ENCODE measurements at regions of chr1 and their contacts with region 1.

Region 1: DNA sequence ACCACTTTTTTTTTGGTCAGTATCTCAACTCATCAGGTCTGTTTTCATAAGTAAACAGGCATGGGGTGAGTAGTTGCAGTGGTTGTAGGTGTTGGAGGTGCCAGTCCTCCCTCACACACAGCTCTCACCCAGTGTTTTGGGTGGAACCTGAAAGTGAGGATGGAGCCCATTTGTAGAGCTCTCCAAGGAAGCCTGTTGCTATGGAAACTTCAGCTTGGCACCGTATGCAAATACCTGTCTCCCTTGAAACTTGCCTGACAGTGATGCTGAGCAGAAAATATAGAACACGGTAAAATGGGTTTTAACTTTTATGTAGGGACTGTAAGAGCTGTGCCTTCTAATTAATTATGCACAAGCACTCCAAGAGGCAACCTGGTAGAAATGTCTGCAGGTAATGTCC is 214.1 kb downstream of the AJAP1 start:
- DNase-seq: no peak
- H3K27ac ChIP-seq: no peak overlapping the region
- CTCF ChIP-seq: no peak

Region 2: DNA sequence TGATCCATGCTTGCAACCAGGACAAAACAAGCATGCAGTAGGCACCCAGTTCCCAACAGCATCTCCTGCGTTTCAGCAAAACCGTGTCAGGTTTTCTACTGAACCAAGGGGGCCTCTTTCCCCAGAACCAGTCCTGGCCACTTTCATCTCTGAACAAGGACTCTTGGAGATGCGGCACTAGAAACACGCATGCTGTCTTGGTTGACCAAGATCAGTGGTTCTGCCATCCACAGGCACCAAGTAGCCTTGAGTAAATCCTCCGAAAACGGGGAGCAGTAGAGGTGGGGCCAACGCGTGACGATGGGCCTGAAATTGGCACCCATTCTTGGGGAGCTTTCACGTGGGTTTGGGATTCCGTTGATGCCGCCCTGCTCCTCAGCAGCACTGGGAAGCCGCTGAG is 276.6 kb before region 1 on chr1:
- CTCF ChIA-PET with region 1: no interaction called
- POLR2A ChIA-PET with region 1: interaction called, 11 read pairs
- DNase-seq: no peak
- H3K27ac ChIP-seq: no peak overlapping the region
- CTCF ChIP-seq: no peak

Region 3: DNA sequence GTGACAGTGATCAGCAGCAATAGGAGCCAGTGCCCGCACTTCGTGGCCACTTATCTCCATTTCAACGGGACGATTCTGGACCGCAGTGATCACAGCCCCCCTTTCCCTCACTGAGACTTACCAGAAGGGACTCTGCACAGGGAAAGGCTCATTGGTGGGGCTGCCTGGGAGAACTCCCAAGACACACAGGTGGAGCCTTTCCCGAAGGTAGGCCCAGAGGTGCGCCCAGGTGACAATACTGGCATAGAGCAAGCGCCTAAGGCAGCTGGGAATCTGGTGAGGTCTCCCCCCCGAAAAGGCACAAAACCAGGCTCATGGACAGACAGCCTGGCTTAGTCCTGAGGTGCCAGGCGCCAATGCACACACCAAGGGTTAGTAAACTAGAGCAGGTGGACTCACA is 104.8 kb after region 1 on chr1:
- CTCF ChIA-PET with region 1: no interaction called
- POLR2A ChIA-PET with region 1: no interaction called
- DNase-seq: no peak
- H3K27ac ChIP-seq: no peak overlapping the region
- CTCF ChIP-seq: no peak

Measured in RWPE1 (cell line).